ENCODE measurements at regions of chr5 and their contacts with region 1.

Region 1: GRCh38 chr5:177478711-177479646 is 5.5 kb upstream of the DBN1 start:
- DNase-seq: peak; percentile 70 to 89 (median 86)
- H3K4me3 ChIP-seq: no peak overlapping the region
- H3K27ac ChIP-seq: peak overlapping the region in 1 of 2 experiments; percentile 56
- H3K4me1 ChIP-seq: peaks cover 0 to 46% (median 40%) of the 10 kb centered on the region in 4 experiments
- H3K27me3 ChIP-seq: no peaks in the 10 kb centered on the region

Region 2: DNA sequence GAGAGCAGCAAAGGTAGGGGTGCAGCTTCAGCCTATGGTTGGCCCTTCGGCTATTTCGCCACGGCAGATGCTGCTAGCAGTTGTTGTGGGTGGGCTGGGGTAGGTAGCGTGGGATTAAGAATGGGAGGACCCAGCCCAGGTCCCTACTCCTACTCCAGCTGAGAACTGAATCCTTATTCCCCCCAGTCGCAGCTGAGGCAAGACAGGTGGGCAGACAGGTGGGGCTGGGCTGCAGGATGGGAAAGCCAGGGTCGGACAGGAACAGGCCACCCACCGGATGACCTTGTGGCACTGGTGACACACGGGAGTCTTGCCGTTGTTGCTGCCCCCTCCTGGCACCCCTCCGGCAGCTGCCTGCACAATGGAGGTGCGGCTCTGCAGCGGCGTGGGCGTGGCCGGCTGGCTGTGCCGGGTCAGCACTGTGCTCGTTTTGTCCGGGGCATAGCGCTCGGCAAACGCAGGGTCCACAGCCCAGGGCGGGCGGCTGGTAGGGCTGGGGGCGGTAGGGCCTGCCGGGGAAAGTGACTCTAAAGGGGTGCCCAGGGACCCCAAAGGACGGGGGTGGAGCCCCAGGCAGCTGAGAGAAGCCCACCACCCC is 10.2 kb after region 1 on chr5:
- CTCF ChIA-PET with region 1: interaction called, 40 read pairs
- POLR2A ChIA-PET with region 1: interaction called, 5 read pairs
- DNase-seq: no peak
- H3K4me3 ChIP-seq: no peak overlapping the region
- H3K27ac ChIP-seq: no peak overlapping the region
- H3K4me1 ChIP-seq: peaks cover 0 to 12% (median 5%) of the 10 kb centered on the region in 4 experiments
- H3K27me3 ChIP-seq: no peaks in the 10 kb centered on the region

Measured in common myeloid progenitor, CD34-positive (primary cell).